OCI-LY7 (cell line): ENCODE measurements at regions of chr17 and their contacts with region 1.

Region 1: GRCh38 chr17:75896415-75897159 is at the start of gene TRIM65:
- DNase-seq: peak; percentile 90
- H3K4me3 ChIP-seq: peak within 1 kb of the TSS; percentile 80
- H3K27ac ChIP-seq: peak within 1 kb of the TSS; percentile 55
- H3K4me1 ChIP-seq: peaks cover 23% of the 10 kb centered on the region
- CTCF ChIP-seq: peak; percentile 54
- total RNA-seq, gene TRIM65: 45.0 and 54.2 TPM in 2 replicates

Region 2: DNA sequence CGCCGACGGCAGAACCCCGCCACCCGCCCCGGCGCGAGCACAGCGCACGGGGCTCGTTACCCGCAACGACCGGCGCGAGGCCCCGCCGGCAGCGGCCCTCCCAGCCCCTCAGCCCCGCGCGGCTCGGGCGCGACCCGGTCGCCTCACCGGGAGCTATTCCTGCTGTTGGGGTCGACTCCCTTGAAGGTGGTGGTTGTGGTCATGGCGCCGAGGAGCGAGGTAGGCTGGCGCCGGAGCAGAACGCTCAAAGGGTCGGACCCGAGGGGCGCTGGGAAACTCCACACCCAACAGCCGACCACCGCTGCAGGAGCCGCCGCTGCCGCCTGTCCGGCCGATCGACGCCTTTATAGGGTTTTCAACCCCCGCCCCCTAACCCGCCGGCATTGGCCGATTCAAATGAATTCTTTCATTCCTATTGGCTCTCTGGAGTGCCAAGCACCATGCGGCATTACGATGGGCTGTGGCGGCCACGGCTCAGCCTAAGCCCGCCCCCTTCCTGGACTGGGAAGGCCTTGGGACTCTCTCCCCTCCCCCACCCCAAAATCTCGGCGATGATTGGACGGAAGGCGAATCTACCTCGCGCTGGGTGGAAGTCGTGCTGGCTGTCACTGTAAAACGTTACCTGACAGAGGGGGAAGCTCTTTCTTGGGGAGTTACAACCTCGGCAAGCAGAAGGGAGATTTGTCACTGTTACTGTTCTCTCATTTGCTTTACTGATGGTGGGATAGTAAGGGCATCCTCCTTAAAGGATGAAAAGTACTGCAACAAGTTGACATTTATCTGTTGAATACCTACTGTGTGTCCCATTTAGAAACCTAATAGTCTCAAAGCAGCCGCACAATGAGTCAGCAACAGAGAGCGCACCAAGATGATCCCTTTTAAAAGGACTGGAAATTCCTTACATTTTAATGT is 742.1 kb before region 1 on chr17 and contains the start of gene JPT1:
- CTCF ChIA-PET with region 1: no interaction called
- POLR2A ChIA-PET with region 1: no interaction called
- intact Hi-C with region 1: no loop called
- DNase-seq: peak; percentile 100
- H3K4me3 ChIP-seq: peak within 1 kb of the TSS; percentile 75
- H3K27ac ChIP-seq: peak within 1 kb of the TSS; percentile 78
- H3K4me1 ChIP-seq: peaks cover 24% of the 10 kb centered on the region
- CTCF ChIP-seq: no peak
- total RNA-seq, gene JPT1: 121 and 140 TPM in 2 replicates

Region 3: GRCh38 chr17:75877752-75878173 is 18.8 kb before region 1 on chr17:
- CTCF ChIA-PET with region 1: interaction called, 5 read pairs
- POLR2A ChIA-PET with region 1: interaction called, 4 read pairs
- intact Hi-C with region 1: loop called (anchors 1 kb)
- DNase-seq: peak; percentile 91
- H3K4me3 ChIP-seq: peak overlapping the region; percentile 71
- H3K27ac ChIP-seq: peak overlapping the region; percentile 82
- H3K4me1 ChIP-seq: peaks cover 35% of the 10 kb centered on the region
- CTCF ChIP-seq: peak; percentile 73